ENCODE measurements at regions of chr17 and their contacts with region 1.

Region 1: DNA sequence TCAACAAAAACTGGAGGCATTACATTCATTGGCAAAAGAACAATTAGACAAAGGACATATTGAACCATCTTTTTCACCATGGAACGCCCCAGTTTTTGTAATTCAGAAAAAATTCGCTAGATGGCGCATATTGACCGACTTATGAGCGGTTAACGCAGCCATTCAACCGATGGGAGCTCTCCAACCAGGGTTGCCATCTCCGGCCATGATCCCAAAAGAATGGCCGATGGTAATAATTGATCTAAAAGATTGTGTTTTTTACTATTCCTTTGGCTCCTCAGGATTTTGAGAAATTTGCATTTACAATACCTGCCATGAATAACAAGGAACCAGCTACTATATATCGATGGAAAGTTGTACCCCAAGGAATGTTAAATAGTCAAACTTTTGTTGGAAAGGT is 21.4 kb downstream of the ALOX15B start:
- DNase-seq: peak in 1 of 3 donors; percentile 87
- ATAC-seq: peak; percentile 64
- H3K4me3 ChIP-seq: no peak overlapping the region
- H3K4me1 ChIP-seq: peaks cover 11% of the 10 kb centered on the region
- CTCF ChIP-seq: peak; percentile 35

Region 2: GRCh38 chr17:8091033-8091687 is 30.9 kb after region 1 on chr17:
- intact Hi-C with region 1: loop called in 1 of 2 experiments (anchors 1 kb)
- DNase-seq: no peak
- ATAC-seq: peak; percentile 35
- H3K4me3 ChIP-seq: no peak overlapping the region
- H3K4me1 ChIP-seq: no peaks in the 10 kb centered on the region
- CTCF ChIP-seq: no peak

Measured in mucosa of descending colon (tissue), 3 donors.